ENCODE measurements at regions of chr16 and their contacts with region 1.

Region 1: GRCh38 chr16:20383106-20384029 is 21.2 kb downstream of the PDILT start:
- DNase-seq: peak; percentile 51
- H3K4me3 Mint-ChIP-seq: no peak overlapping the region
- H3K27ac Mint-ChIP-seq: no peak overlapping the region
- H3K4me1 Mint-ChIP-seq: no peaks in the 10 kb centered on the region
- H3K27me3 Mint-ChIP-seq: peaks cover 28% of the 10 kb centered on the region
- CTCF ChIP-seq: peak; percentile 90

Region 2: GRCh38 chr16:19898924-19899604 is 484.3 kb before region 1 on chr16:
- CTCF ChIA-PET with region 1: interaction called, 537 read pairs
- POLR2A ChIA-PET with region 1: no interaction called
- intact Hi-C with region 1: loop called (anchors 1 kb)
- DNase-seq: peak; percentile 73
- H3K4me3 Mint-ChIP-seq: no peak overlapping the region
- H3K27ac Mint-ChIP-seq: no peak overlapping the region
- H3K4me1 Mint-ChIP-seq: no peaks in the 10 kb centered on the region
- H3K27me3 Mint-ChIP-seq: no peaks in the 10 kb centered on the region
- CTCF ChIP-seq: peak; percentile 71

Region 3: DNA sequence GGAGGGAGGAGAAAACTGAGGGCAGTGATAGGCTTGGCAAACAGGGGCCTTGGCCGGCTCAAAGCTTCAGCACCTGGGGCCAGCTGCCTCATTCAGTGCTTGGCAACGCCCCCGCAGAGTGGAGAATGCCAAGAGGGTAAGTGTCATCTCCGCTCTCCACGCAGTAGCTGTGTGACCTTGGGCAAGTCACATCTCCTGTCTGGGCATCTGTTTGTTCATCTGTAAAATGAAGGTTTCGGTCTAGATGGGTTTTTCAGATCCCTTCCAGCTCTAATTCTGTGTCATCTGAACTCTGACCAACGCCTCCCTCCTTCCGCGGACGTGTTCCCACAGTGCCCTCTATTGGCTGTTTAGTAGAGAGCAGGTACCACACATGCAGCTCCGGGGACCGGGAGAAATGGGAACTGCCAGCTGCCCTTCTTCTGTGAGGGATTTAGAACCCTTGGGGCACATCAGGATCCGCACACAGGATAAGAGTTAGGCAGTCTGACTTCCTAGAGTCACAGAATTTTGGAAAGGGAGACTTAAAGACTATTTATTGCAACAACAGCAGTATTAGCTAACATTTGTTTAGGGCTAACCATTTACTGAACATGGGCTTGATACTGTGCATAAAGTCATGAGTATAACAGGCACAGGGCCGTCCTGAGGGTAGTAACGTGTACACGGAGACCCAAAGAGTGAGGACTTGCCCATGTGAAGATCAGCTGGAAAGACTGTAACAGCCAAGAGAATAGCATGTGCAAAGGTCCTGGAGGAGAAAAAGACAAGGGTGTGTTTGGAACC is 82.9 kb before region 1 on chr16:
- CTCF ChIA-PET with region 1: interaction called, 65 read pairs
- POLR2A ChIA-PET with region 1: no interaction called
- intact Hi-C with region 1: loop called (anchors 1 kb)
- DNase-seq: peak; percentile 68
- H3K4me3 Mint-ChIP-seq: no peak overlapping the region
- H3K27ac Mint-ChIP-seq: no peak overlapping the region
- H3K4me1 Mint-ChIP-seq: no peaks in the 10 kb centered on the region
- H3K27me3 Mint-ChIP-seq: peaks cover 54% of the 10 kb centered on the region
- CTCF ChIP-seq: peak; percentile 74

Region 4: GRCh38 chr16:20364051-20364450 is 19.3 kb before region 1 on chr16:
- CTCF ChIA-PET with region 1: interaction called, 19 read pairs
- POLR2A ChIA-PET with region 1: no interaction called
- intact Hi-C with region 1: no loop called
- DNase-seq: no peak
- H3K4me3 Mint-ChIP-seq: no peak overlapping the region
- H3K27ac Mint-ChIP-seq: no peak overlapping the region
- H3K4me1 Mint-ChIP-seq: no peaks in the 10 kb centered on the region
- H3K27me3 Mint-ChIP-seq: peaks cover 56% of the 10 kb centered on the region
- CTCF ChIP-seq: no peak

Region 5: DNA sequence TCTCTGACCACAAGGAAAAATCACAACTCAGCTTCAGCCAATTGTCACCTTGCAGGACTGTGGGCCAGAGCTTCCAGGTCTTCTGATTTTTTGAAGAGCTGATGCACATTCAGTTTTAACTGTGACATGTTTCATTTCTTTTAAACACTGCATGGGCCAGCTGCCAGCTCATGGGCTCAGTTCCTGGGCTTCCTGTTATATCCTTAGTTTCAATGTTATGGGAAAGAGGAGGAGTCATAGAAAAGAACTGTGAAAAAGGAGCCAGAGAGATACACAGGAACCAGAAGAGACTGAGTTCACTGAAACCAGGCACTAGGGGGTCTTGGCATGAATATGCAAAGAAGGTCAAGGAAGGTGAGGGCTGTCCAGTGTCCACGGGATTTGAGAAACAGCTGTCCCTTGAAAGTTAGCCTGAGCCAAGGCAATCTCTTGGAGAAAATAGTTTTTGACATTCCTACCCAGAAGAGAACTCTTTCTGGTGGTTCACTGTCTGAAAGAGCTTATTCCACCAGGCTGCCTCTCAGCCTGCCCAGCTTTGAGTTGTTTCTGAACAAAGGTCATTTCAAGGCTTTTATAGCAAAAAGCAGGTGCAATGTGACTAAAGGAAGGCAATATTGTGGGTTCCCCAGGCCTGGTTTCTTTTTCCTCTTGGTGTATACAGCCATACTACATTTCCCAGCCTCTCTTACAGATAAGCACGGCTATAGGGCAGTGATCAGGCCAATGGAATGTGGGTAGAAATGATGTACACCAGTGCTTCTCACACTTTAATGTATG is 10.6 kb after region 1 on chr16:
- CTCF ChIA-PET with region 1: interaction called, 61 read pairs
- POLR2A ChIA-PET with region 1: no interaction called
- intact Hi-C with region 1: no loop called
- DNase-seq: no peak
- H3K4me3 Mint-ChIP-seq: no peak overlapping the region
- H3K27ac Mint-ChIP-seq: no peak overlapping the region
- H3K4me1 Mint-ChIP-seq: peaks cover 14% of the 10 kb centered on the region
- H3K27me3 Mint-ChIP-seq: no peaks in the 10 kb centered on the region
- CTCF ChIP-seq: no peak

Region 6: GRCh38 chr16:20704281-20704680 is 320.9 kb after region 1 on chr16:
- CTCF ChIA-PET with region 1: interaction called, 3 read pairs
- POLR2A ChIA-PET with region 1: no interaction called
- intact Hi-C with region 1: loop called (anchors 5 kb)
- DNase-seq: no peak
- H3K4me3 Mint-ChIP-seq: no peak overlapping the region
- H3K27ac Mint-ChIP-seq: no peak overlapping the region
- H3K4me1 Mint-ChIP-seq: no peaks in the 10 kb centered on the region
- H3K27me3 Mint-ChIP-seq: peaks cover 20% of the 10 kb centered on the region
- CTCF ChIP-seq: no peak

Measured in MCF 10A (cell line).